HepG2 (cell line): ENCODE measurements at regions of chr18 and their contacts with region 1.

Region 1: DNA sequence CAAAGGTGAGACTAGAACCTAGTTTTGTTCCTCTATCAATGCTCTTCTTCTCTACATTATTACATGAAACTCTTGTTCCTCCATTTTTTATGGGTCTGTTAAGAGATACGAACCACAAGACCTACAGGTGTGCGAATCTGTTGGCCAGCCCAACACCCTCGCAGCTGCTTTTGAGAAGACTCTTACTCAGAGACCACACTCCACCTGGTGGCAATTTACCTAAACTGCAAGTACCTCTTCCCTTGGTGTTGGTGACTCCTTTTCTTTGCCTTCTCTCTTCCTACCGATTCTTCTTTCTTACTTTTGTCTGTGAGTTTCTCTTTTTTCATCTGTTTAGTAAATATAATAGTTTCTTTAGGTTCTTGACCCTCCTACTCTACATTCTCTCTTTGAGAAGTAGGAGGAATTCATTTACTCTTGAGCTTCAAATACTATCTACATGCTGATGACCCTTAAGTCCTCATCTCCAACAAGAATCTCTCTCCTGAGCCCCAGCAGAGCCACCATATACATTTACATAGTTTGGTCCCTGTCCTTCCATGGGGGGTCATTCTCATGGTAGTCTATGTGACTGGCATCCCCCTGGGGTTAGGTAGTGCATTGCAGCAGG is 81.8 kb upstream of the GAREM1 start:
- DNase-seq: peak; percentile 68
- ATAC-seq: peak; percentile 85
- H3K4me3 ChIP-seq: no peak overlapping the region
- H3K27ac ChIP-seq: no peak overlapping the region
- H3K4me1 ChIP-seq: no peaks in the 10 kb centered on the region
- H3K27me3 ChIP-seq: no peaks in the 10 kb centered on the region; a peak in 2 of 5 replicates
- CTCF ChIP-seq: peak; percentile 79
- EP300 ChIP-seq: no peak
- POLR2A ChIP-seq: no peak
- RAD21 ChIP-seq: peak; percentile 45; the same call in 1 of the 2 replicates

Region 2: GRCh38 chr18:32271672-32272208 is 280.8 kb before region 1 on chr18:
- CTCF ChIA-PET with region 1: interaction called, 76 read pairs
- POLR2A ChIA-PET with region 1: no interaction called
- in situ Hi-C with region 1: loop called (anchors 5 kb)
- intact Hi-C with region 1: loop called (anchors 1 kb)
- DNase-seq: peak; percentile 36
- ATAC-seq: peak; percentile 90
- H3K4me3 ChIP-seq: no peak overlapping the region
- H3K27ac ChIP-seq: no peak overlapping the region
- H3K4me1 ChIP-seq: no peaks in the 10 kb centered on the region
- H3K27me3 ChIP-seq: no peaks in the 10 kb centered on the region
- CTCF ChIP-seq: peak; percentile 81
- EP300 ChIP-seq: no peak
- POLR2A ChIP-seq: no peak
- RAD21 ChIP-seq: peak; percentile 75

Region 3: DNA sequence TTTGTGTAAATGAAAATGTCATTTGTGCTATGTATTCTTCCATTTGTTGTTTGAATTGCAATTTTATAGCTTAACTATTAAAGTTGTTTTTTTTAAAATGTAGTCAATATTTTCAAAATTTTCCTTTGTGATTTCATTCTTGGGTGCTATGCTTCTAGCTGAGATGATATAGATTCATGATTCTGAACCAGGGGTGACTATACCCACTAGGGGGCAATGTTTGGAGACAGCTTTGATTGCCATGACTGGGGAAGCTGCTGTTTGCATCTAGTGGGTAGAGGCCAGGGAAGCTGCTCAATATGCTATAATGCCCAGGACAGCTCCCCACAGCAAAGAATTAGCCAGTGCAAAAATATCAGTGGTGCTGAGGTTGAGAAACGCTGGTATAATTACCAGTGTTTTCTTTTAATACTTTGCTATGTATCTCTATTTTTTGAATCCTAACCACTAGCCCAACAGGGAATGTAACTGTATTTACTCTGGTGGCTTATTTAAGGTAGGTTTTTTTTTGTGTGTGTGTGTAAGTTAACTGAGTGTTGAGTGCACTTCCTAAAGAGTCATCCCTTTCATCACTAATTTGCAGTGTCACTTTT is 262.9 kb before region 1 on chr18:
- CTCF ChIA-PET with region 1: interaction called, 16 read pairs
- POLR2A ChIA-PET with region 1: no interaction called
- in situ Hi-C with region 1: no loop called
- intact Hi-C with region 1: loop called (anchors 1 kb)
- DNase-seq: peak; percentile 66
- ATAC-seq: peak; percentile 95
- H3K4me3 ChIP-seq: no peak overlapping the region
- H3K27ac ChIP-seq: no peak overlapping the region
- H3K4me1 ChIP-seq: no peaks in the 10 kb centered on the region
- H3K27me3 ChIP-seq: no peaks in the 10 kb centered on the region
- CTCF ChIP-seq: peak; percentile 75
- EP300 ChIP-seq: no peak
- POLR2A ChIP-seq: no peak
- RAD21 ChIP-seq: peak; percentile 70

Region 4: DNA sequence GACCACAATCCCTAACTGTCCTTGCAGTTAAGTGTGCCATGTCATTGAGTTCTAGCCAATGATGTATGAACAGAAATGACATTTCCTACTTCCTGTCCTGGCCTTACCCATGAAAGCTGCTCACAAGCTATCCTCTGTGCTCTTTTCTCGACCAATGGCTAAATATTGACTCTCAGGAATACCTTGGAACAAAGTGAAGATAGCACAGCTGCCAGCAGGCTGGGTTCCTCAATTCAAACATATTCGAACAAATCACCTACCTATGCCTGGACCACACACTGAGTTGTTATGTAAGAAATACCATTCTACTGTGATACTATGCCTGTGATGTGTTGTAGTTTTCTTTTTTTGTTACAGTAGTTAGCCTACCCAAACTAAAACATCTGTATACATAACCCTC is 146.9 kb before region 1 on chr18:
- CTCF ChIA-PET with region 1: no interaction called
- POLR2A ChIA-PET with region 1: no interaction called
- in situ Hi-C with region 1: no loop called
- intact Hi-C with region 1: no loop called
- DNase-seq: no peak
- ATAC-seq: no peak
- H3K4me3 ChIP-seq: no peak overlapping the region
- H3K27ac ChIP-seq: no peak overlapping the region
- H3K4me1 ChIP-seq: no peaks in the 10 kb centered on the region
- H3K27me3 ChIP-seq: no peaks in the 10 kb centered on the region
- CTCF ChIP-seq: no peak
- EP300 ChIP-seq: no peak
- POLR2A ChIP-seq: no peak
- RAD21 ChIP-seq: no peak